Endothelial cell of umbilical vein (primary cell): ENCODE measurements at regions of chr2 and their contacts with region 1.

Region 1: GRCh38 chr2:165203689-165204559 is at the start of gene SCN3A:
- DNase-seq: peak; percentile 55
- H3K4me3 ChIP-seq: no peak within 1 kb of the TSS
- H3K27ac ChIP-seq: no peak within 1 kb of the TSS
- H3K4me1 ChIP-seq: no peaks in the 10 kb centered on the region
- H3K27me3 ChIP-seq: peaks cover 0 to 1% of the 10 kb centered on the region in 2 experiments
- CTCF ChIP-seq: peak; percentile 65 to 69
- POLR2A ChIP-seq: no peak
- total RNA-seq, gene SCN3A: not detected in 2 replicates

Region 2: GRCh38 chr2:163759023-163759422 is 1444.9 kb before region 1 on chr2:
- CTCF ChIA-PET with region 1: no interaction called
- POLR2A ChIA-PET with region 1: no interaction called
- dilution Hi-C with region 1: no loop called
- intact Hi-C with region 1: no loop called
- DNase-seq: no peak
- H3K4me3 ChIP-seq: no peak overlapping the region
- H3K27ac ChIP-seq: no peak overlapping the region
- H3K4me1 ChIP-seq: no peaks in the 10 kb centered on the region
- H3K27me3 ChIP-seq: peaks cover 0 to 1% of the 10 kb centered on the region in 2 experiments
- CTCF ChIP-seq: no peak
- POLR2A ChIP-seq: no peak

Region 3: DNA sequence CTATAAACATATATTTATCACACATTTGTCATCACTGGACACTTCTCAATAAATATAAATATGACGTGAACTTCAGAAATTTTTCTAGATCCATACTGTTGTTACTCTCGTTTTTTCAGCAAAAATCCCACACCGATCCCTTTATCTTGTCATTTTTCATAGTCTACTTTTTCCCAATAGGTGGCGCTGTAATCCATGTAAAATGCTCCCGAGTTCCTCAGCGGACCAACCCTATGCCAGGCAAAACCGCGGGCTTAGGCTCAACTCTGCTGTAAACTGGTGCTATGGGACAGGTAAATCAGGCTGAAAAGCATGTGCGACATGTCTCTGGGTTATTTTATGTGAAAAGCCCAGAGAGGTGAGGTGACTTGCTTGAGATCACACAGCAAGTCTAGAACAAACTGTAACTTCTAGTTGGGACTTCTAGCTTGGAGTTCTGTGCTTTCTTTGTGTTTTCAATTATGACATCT is 466.3 kb before region 1 on chr2:
- CTCF ChIA-PET with region 1: interaction called, 10 read pairs
- POLR2A ChIA-PET with region 1: no interaction called
- dilution Hi-C with region 1: no loop called
- intact Hi-C with region 1: loop called (anchors 5 kb)
- DNase-seq: peak; percentile 82
- H3K4me3 ChIP-seq: no peak overlapping the region
- H3K27ac ChIP-seq: no peak overlapping the region
- H3K4me1 ChIP-seq: peaks cover 8% of the 10 kb centered on the region
- H3K27me3 ChIP-seq: no peaks in the 10 kb centered on the region
- CTCF ChIP-seq: peak; percentile 48 to 61
- POLR2A ChIP-seq: no peak

Region 4: GRCh38 chr2:165015052-165015642 is 188.8 kb before region 1 on chr2:
- CTCF ChIA-PET with region 1: interaction called, 157 read pairs
- POLR2A ChIA-PET with region 1: interaction called, 3 read pairs
- dilution Hi-C with region 1: no loop called
- intact Hi-C with region 1: loop called (anchors 1 kb)
- DNase-seq: peak; percentile 61
- H3K4me3 ChIP-seq: no peak overlapping the region
- H3K27ac ChIP-seq: no peak overlapping the region
- H3K4me1 ChIP-seq: no peaks in the 10 kb centered on the region
- H3K27me3 ChIP-seq: peaks cover 16 to 23% of the 10 kb centered on the region in 2 experiments
- CTCF ChIP-seq: peak; percentile 78 to 91
- POLR2A ChIP-seq: no peak

Region 5: DNA sequence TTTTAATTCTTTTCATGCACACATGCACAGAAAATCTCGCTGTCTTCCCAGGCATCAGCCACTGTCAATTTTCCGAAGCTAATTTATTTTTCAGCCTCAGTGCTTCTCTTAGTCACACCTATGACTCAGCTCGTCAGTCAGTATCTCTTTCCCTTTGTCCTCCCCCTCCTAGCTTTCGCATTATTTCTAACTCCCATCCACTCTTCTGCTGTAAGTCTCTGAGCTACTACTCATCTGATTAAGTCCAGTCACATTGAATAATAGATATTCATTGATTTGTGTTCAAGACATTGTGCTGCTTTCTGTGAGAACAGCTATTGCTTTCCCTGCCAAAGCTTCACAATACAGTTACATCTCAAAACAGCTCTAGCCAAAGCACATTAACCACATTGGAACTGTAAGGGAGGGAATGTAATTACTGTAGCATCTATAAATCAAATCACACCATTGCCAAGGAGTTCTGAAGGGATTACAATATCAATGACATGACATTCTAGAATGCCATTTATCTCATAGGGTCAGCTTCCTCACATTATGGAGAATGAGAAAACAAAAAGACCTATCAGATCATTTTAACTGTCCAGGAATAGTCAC is 89.5 kb before region 1 on chr2:
- CTCF ChIA-PET with region 1: no interaction called
- POLR2A ChIA-PET with region 1: no interaction called
- dilution Hi-C with region 1: no loop called
- intact Hi-C with region 1: no loop called
- DNase-seq: no peak
- H3K4me3 ChIP-seq: no peak overlapping the region
- H3K27ac ChIP-seq: no peak overlapping the region
- H3K4me1 ChIP-seq: no peaks in the 10 kb centered on the region
- H3K27me3 ChIP-seq: no peaks in the 10 kb centered on the region
- CTCF ChIP-seq: no peak
- POLR2A ChIP-seq: no peak

Region 6: DNA sequence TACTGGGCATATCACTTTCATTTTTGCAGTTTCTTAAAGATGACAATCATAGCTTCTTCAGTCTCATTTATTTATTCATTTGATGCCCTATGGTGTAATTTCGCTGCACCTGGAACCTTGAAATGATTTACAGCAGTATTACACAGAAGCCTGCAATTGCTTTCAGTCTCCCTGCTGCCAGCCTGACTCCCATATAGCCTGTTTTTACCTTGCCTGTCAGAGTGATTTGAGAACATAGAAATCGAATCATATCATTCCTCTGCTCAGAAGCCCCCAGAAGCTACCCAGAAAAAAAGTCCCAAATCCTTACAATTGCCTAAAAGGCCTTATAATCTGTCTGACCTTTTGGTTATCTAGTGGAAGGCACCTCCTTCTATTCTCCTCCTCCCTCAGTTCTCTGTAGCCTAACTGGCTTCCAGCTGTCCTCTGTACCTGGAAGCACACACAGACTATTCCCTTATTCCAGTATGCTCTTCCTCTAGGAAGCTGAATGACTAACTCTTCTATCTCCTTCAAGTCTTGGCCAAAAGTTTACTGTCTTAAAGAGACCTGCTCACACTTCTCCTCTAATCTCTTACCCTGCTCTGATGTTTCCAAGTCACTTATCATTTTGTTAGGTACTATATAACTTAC is 12.7 kb before region 1 on chr2:
- CTCF ChIA-PET with region 1: interaction called, 24 read pairs
- POLR2A ChIA-PET with region 1: no interaction called
- dilution Hi-C with region 1: no loop called
- intact Hi-C with region 1: no loop called
- DNase-seq: no peak
- H3K4me3 ChIP-seq: no peak overlapping the region
- H3K27ac ChIP-seq: no peak overlapping the region
- H3K4me1 ChIP-seq: no peaks in the 10 kb centered on the region
- H3K27me3 ChIP-seq: peaks cover 3 to 4% of the 10 kb centered on the region in 2 experiments
- CTCF ChIP-seq: no peak
- POLR2A ChIP-seq: no peak

Region 7: DNA sequence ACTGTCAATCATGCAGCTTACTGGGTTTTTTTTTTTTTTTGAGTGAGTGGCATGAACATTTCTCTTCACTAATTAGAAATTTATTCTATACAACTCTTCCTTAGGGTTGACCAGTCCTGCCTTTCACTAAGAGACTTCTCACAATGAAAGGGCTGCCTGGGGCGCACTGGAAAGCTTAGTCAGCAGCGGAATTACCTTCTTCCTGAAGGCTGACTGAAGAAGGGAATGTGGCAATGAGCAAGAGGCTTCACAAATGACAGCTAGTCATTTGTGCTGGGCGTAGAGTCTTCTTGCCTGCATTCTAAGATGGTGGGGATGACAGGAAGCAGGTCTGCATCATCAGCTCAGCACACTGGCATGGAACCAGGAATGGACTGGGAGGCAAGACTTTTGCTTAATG is 15.6 kb after region 1 on chr2:
- CTCF ChIA-PET with region 1: interaction called, 20 read pairs
- POLR2A ChIA-PET with region 1: no interaction called
- dilution Hi-C with region 1: no loop called
- intact Hi-C with region 1: no loop called
- DNase-seq: no peak
- H3K4me3 ChIP-seq: no peak overlapping the region
- H3K27ac ChIP-seq: no peak overlapping the region
- H3K4me1 ChIP-seq: no peaks in the 10 kb centered on the region
- H3K27me3 ChIP-seq: no peaks in the 10 kb centered on the region
- CTCF ChIP-seq: no peak
- POLR2A ChIP-seq: no peak

Region 8: DNA sequence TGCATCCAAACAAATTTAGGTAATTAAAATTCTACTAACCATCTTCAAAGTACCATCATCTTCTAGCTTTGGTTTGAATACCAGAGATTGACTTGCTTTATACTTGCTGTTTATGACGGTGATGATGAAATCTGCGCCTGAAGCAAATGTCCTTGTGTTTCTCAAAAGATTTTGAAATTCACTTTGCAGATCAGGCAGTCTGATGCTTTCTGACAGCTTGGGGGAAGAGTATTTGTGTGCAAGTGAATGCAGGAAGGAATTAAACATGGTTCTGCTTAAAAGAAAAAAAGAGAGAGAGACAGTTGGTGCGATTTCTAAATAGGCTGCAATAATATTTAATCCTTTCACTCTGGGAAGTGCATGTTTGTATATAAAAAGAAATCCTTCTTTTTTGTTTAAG is 295.2 kb after region 1 on chr2:
- CTCF ChIA-PET with region 1: no interaction called
- POLR2A ChIA-PET with region 1: no interaction called
- dilution Hi-C with region 1: no loop called
- intact Hi-C with region 1: no loop called
- DNase-seq: no peak
- H3K4me3 ChIP-seq: no peak overlapping the region
- H3K27ac ChIP-seq: no peak overlapping the region
- H3K4me1 ChIP-seq: no peaks in the 10 kb centered on the region
- H3K27me3 ChIP-seq: no peaks in the 10 kb centered on the region
- CTCF ChIP-seq: no peak
- POLR2A ChIP-seq: no peak